PC-3 (cell line): ENCODE measurements at regions of chr10 and their contacts with region 1.

Region 1: DNA sequence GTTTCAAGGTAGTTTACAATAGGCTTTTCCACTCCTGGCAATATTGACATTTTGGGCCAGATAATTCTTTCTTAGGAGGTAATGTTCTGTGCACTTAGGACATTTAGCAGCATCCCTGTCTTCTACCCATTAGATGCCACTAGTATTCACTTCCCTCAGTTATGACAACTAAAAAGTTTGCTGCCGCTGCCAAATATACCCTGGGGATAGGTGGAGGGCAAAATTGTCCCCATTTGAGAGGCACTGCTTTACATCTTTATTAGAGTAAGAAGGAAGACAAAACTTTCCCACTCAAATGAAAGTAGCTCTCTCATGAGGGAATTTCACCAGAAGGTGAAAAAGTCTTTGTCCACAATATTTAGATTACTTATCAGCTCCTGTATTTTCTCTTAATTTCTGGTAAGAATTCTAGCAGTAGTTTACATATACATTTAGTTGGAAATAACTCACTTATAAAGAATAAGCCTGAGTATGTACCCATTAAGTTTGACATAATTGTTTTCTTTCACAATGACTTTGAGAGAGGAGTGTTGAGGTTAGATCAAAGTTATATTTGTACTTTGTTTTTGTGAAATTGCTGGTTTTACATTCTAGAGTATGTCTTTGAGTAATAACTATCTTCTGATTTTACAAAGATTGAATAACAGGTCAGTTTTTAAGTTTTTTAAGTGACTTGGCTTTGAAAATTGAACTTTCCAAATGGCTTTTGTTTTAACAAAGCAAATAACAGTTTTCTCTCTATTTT is 46.0 kb downstream of the HELLS start:
- DNase-seq: no peak
- ATAC-seq: no peak
- H3K4me3 ChIP-seq: no peak overlapping the region
- H3K27ac ChIP-seq: no peak overlapping the region
- H3K4me1 ChIP-seq: no peaks in the 10 kb centered on the region
- H3K27me3 ChIP-seq: no peaks in the 10 kb centered on the region
- CTCF ChIP-seq: no peak

Region 2: GRCh38 chr10:93947055-93947454 is 644.6 kb before region 1 on chr10:
- CTCF ChIA-PET with region 1: no interaction called
- POLR2A ChIA-PET with region 1: no interaction called
- intact Hi-C with region 1: no loop called
- DNase-seq: peak; percentile 16
- ATAC-seq: no peak
- H3K4me3 ChIP-seq: no peak overlapping the region
- H3K27ac ChIP-seq: no peak overlapping the region
- H3K4me1 ChIP-seq: no peaks in the 10 kb centered on the region
- H3K27me3 ChIP-seq: no peaks in the 10 kb centered on the region
- CTCF ChIP-seq: no peak

Region 3: GRCh38 chr10:94571528-94571927 is 20.1 kb before region 1 on chr10:
- CTCF ChIA-PET with region 1: no interaction called
- POLR2A ChIA-PET with region 1: no interaction called
- intact Hi-C with region 1: loop called (anchors 2 kb)
- DNase-seq: peak; percentile 26
- ATAC-seq: peak; percentile 53; the same call in 1 of the 2 replicates
- H3K4me3 ChIP-seq: no peak overlapping the region
- H3K27ac ChIP-seq: no peak overlapping the region
- H3K4me1 ChIP-seq: no peaks in the 10 kb centered on the region
- H3K27me3 ChIP-seq: no peaks in the 10 kb centered on the region
- CTCF ChIP-seq: no peak